ENCODE measurements at regions of chr10 and their contacts with region 1.

Region 1: GRCh38 chr10:48745662-48746245 is 61.1 kb downstream of the WDFY4 start:
- DNase-seq: peak; percentile 55 to 71
- H3K4me3 ChIP-seq: no peak overlapping the region
- H3K4me3 Mint-ChIP-seq: no peak overlapping the region
- H3K27ac Mint-ChIP-seq: no peak overlapping the region
- H3K4me1 ChIP-seq: no peaks in the 10 kb centered on the region
- H3K4me1 Mint-ChIP-seq: no peaks in the 10 kb centered on the region
- H3K27me3 ChIP-seq: no peaks in the 10 kb centered on the region; the same call in 1 of the 2 replicates
- H3K27me3 Mint-ChIP-seq: peaks cover 29% of the 10 kb centered on the region
- CTCF ChIP-seq: peak; percentile 68 to 87

Region 2: GRCh38 chr10:48682265-48682664 is 63.5 kb before region 1 on chr10:
- CTCF ChIA-PET with region 1: interaction called, 11 read pairs
- POLR2A ChIA-PET with region 1: no interaction called
- intact Hi-C with region 1: no loop called
- DNase-seq: no peak
- H3K4me3 ChIP-seq: no peak overlapping the region
- H3K4me3 Mint-ChIP-seq: no peak overlapping the region
- H3K27ac Mint-ChIP-seq: no peak overlapping the region
- H3K4me1 ChIP-seq: no peaks in the 10 kb centered on the region
- H3K4me1 Mint-ChIP-seq: no peaks in the 10 kb centered on the region
- H3K27me3 ChIP-seq: no peaks in the 10 kb centered on the region
- H3K27me3 Mint-ChIP-seq: peaks cover 4% of the 10 kb centered on the region
- CTCF ChIP-seq: no peak

Region 3: GRCh38 chr10:48821692-48822091 is 75.9 kb after region 1 on chr10:
- CTCF ChIA-PET with region 1: no interaction called
- POLR2A ChIA-PET with region 1: no interaction called
- intact Hi-C with region 1: loop called (anchors 1 kb)
- DNase-seq: no peak
- H3K4me3 ChIP-seq: no peak overlapping the region
- H3K4me3 Mint-ChIP-seq: no peak overlapping the region
- H3K27ac Mint-ChIP-seq: no peak overlapping the region
- H3K4me1 ChIP-seq: no peaks in the 10 kb centered on the region
- H3K4me1 Mint-ChIP-seq: no peaks in the 10 kb centered on the region
- H3K27me3 ChIP-seq: peaks cover 1% of the 10 kb centered on the region; the same call in 1 of the 2 replicates
- H3K27me3 Mint-ChIP-seq: peaks cover 28% of the 10 kb centered on the region
- CTCF ChIP-seq: no peak

Measured in Caco-2 (cell line).